ENCODE measurements at regions of chr20 and their contacts with region 1.

Region 1: DNA sequence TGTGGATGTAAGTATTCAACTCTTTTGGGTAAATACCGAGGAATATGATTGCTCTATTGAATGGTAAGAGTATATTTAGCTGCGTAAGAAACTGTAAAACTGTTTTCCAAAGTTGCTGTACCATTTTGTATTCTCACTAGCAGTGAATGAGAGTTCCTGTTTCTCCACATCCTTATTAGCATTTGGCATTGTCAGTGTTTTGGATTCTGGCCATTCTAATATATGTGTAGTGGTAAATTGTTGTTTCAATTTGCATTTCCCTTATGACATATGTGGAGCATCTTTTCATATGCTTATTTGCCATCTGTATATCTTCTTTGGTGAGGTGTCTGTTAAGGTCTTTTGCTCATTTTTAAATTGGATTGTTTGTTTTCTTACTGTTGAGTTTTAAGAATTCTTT is 29.3 kb upstream of the KAT14 start:
- DNase-seq: no peak
- H3K4me3 ChIP-seq: no peak overlapping the region
- CTCF ChIP-seq: no peak
- POLR2A ChIP-seq: no peak

Region 2: DNA sequence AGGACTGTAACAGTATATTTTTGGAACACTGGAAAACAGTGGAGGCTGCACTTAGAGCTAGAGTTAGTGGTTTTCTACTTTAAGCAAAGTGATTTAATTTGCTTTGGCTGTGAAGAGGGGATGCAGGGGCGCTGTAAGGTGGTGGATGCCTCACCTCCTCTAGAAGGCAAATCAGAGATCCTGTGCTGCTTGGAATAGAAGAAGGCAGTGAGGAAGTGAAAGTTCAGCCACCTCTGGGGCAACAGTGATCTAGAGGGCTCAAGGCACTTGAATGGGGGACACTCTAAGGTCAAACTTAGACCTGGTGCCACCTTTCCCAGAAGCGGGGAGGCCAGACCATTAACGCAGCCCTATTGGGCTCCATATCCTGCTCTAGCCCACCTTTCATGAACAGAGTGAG is 1397.5 kb before region 1 on chr20:
- intact Hi-C with region 1: loop called (anchors 5 kb)
- DNase-seq: no peak
- H3K4me3 ChIP-seq: no peak overlapping the region
- CTCF ChIP-seq: no peak
- POLR2A ChIP-seq: no peak

Region 3: GRCh38 chr20:18077157-18077556 is 31.2 kb before region 1 on chr20:
- intact Hi-C with region 1: no loop called
- DNase-seq: peak in 1 of 2 donors; percentile 20
- H3K4me3 ChIP-seq: no peak overlapping the region
- CTCF ChIP-seq: no peak
- POLR2A ChIP-seq: no peak

Measured in lower leg skin (tissue), 4 donors.